ENCODE measurements at regions of chr3 and their contacts with region 1.

Region 1: GRCh38 chr3:106794442-106794841 is 582.8 kb upstream of the CCDC54 start:
- DNase-seq: no peak
- H3K4me3 ChIP-seq: no peak overlapping the region
- H3K27ac ChIP-seq: no peak overlapping the region
- H3K4me1 ChIP-seq: 0 out of 2 replicates have a peak, but pooled peaks cover 7% of the 10 kb centered on the region
- H3K27me3 ChIP-seq: no peaks in the 10 kb centered on the region
- CTCF ChIP-seq: no peak

Region 2: GRCh38 chr3:106765342-106765741 is 29.1 kb before region 1 on chr3:
- CTCF ChIA-PET with region 1: no interaction called
- POLR2A ChIA-PET with region 1: interaction called, 14 read pairs
- intact Hi-C with region 1: no loop called
- DNase-seq: peak; percentile 22 to 82
- H3K4me3 ChIP-seq: no peak overlapping the region
- H3K27ac ChIP-seq: 0 out of 2 replicates have a peak overlapping the region, but pooled peaks have one; percentile 7
- H3K4me1 ChIP-seq: 0 out of 2 replicates have a peak, but pooled peaks cover 10% of the 10 kb centered on the region
- H3K27me3 ChIP-seq: no peaks in the 10 kb centered on the region
- CTCF ChIP-seq: no peak

Measured in PC-9 (cell line).